Prostate gland (tissue), 2 donors: ENCODE measurements at regions of chr6 and their contacts with region 1.

Region 1: GRCh38 chr6:20092071-20092566 is 120.2 kb downstream of the MBOAT1 start:
- DNase-seq: no peak
- H3K4me3 ChIP-seq: no peak overlapping the region
- H3K27ac ChIP-seq: no peak overlapping the region
- H3K4me1 ChIP-seq: no peaks in the 10 kb centered on the region
- H3K27me3 ChIP-seq: no peaks in the 10 kb centered on the region
- CTCF ChIP-seq: peak; percentile 34 to 83 (median 72)
- POLR2A ChIP-seq: no peak

Region 2: GRCh38 chr6:19934996-19935591 is 157.0 kb before region 1 on chr6:
- intact Hi-C with region 1: no loop called
- DNase-seq: no peak
- H3K4me3 ChIP-seq: no peak overlapping the region
- H3K27ac ChIP-seq: no peak overlapping the region
- H3K4me1 ChIP-seq: no peaks in the 10 kb centered on the region
- H3K27me3 ChIP-seq: no peaks in the 10 kb centered on the region
- CTCF ChIP-seq: no peak
- POLR2A ChIP-seq: no peak

Region 3: GRCh38 chr6:20126789-20127653 is 34.9 kb after region 1 on chr6:
- intact Hi-C with region 1: loop called (anchors 5 kb)
- DNase-seq: peak; percentile 48
- H3K4me3 ChIP-seq: no peak overlapping the region
- H3K27ac ChIP-seq: peak overlapping the region; percentile 39 to 44
- H3K4me1 ChIP-seq: no peaks in the 10 kb centered on the region
- H3K27me3 ChIP-seq: no peaks in the 10 kb centered on the region
- CTCF ChIP-seq: peak; percentile 52 to 86 (median 80)
- POLR2A ChIP-seq: no peak

Region 4: DNA sequence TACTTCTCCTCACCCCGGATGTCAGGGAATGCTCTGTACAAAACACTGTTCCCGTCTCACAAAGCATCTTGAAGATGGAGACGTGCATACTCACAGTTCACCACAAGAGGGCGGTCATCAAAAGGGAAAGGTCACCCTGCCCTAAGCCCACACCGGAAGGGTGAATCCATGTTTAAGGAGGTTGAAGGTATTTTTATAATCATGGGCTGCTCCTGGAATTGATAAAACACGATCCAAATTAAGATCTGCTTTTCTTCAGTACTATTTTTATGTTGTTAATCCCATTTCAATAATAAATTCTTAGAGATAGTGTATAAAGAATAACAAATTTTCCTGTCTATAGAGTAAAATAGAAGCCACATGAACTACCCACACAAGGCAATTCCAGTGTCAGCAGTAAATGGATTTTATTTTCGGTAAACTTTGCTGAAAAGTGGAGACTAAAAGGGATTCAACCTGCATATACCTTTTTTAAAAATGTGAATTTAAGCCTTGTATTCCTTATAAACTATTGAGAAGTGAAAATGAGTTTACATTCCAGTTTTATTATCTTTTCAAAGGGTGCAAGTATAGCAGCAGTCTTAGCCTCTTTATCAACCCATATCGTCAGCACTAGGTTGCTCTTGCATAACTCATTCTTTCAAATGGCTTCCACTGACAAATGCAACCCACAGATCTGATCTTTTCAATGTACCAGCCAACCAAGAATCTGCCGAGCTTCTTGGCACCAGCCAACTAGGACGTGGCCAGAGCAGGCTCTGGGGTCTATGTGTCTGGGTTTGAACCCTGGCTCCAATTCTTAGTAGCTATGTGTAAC is 199.9 kb after region 1 on chr6:
- intact Hi-C with region 1: loop called (anchors 10 kb)
- DNase-seq: peak; percentile 74
- H3K4me3 ChIP-seq: no peak overlapping the region
- H3K27ac ChIP-seq: no peak overlapping the region
- H3K4me1 ChIP-seq: no peaks in the 10 kb centered on the region
- H3K27me3 ChIP-seq: no peaks in the 10 kb centered on the region
- CTCF ChIP-seq: peak; percentile 79 to 88 (median 84)
- POLR2A ChIP-seq: no peak

Region 5: DNA sequence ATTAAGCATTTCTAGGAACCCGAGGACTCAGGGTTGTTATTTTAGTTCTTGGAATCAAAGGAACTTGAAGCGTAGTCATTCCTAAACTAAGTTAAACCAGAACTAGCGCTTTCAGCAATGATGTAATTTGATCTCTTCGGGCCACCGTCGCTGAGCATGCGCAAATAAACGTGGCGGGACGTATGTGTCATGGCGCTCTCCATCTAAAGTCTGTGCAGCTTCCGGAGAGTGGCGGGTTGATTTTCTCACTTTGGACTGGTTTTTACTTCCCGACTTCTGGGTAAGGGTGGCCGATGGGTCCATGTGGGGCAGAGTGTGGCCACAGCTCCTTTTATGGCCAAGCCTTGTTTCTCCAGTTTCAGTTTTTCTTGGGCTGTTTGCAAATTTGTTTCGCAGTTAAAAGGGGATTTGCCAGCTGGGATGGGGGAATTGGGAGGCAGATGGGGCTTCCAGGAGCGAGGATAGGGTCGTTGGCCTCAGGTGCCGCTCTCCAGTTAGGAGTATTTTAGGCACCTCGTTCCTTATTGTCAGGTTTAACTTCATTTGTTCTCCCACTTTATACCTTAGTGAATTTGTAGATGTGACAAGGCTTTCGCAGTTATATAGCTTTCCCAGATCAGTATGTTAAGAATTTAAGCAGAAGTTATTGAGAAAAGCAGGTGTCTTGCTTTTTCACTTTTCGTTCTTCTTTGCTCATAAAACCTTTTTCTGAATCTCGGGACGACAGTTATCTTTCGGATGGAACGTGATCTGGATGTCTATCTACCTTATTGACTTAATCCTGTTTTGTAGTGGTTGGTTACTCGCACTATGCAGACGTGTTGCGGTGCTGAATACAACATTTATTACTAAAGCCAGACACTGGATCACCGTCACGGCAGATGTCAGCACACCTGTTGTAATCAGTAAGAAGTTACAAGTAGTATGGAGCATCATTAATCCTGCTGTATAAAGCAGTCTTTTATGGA is 442.5 kb after region 1 on chr6 and contains the start of gene CDKAL1:
- intact Hi-C with region 1: loop called (anchors 5 kb)
- DNase-seq: peak; percentile 87
- H3K4me3 ChIP-seq: peak within 1 kb of the TSS; percentile 61 to 80
- H3K27ac ChIP-seq: peak within 1 kb of the TSS; percentile 69 to 86
- H3K4me1 ChIP-seq: no peaks in the 10 kb centered on the region
- H3K27me3 ChIP-seq: no peaks in the 10 kb centered on the region
- CTCF ChIP-seq: peak in 1 of 4 experiments; percentile 22
- POLR2A ChIP-seq: no peak
- total RNA-seq, gene CDKAL1: 12.1 to 19.0 TPM